ENCODE measurements at regions of chr20 and their contacts with region 1.

Region 1: DNA sequence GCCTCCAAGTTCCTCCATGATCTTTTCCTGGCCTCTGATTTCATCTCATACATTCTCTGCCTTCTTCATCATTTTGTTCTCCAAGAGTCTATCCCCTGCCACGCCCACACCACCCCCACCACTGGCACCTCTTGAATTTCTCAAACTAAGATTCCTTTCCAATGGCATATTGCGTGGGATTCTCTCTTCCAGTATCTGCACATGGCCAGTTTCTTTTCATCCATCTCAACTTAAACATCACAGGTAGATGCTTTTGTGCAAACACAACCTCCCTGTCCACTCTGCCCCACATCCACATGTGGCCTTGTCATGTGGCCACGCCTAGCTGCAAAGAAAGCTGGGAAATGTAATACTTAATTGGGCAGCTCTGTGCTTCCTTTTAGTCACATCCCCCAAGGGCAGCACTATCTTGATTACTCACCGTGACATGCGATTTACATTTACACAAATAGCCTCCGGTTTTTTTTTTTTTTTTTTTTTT is 33.4 kb upstream of the ZMYND8 start:
- DNase-seq: no peak
- ATAC-seq: no peak
- H3K4me3 ChIP-seq: no peak overlapping the region
- H3K27ac ChIP-seq: no peak overlapping the region
- H3K4me1 ChIP-seq: no peaks in the 10 kb centered on the region
- H3K27me3 ChIP-seq: no peaks in the 10 kb centered on the region

Region 2: DNA sequence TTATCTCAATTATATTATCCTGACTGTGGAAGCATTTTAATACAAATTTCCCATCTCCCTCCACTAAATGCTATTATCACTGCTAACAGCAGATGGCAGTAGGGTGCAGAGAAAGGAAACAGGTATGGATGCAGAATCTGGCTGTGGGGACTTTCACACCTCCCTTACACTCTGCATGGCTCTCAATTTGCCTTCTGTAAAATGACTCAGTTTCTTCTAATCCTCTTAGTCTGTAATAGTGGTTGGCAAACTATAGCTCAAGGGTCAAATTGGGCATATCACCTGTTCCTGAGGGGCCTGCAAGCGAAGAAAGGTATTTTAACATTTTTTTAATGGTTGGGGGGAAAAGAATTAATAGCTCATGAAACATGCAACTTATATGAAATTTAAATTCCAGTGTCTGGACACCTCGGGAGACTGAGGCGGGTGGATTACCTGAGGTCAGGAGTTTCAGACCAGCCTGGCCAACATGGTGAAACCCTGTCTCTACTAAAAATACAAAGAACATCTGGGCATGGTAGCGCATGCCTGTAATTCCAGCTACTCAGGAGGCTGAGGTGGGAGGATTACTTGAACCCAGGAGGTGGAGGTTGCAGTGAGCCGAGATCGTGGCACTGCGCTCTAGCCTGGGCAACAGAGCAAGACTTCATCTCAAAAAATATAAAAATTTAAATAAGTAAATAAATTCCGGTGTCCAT is 116.9 kb before region 1 on chr20:
- intact Hi-C with region 1: loop called (anchors 2 kb)
- DNase-seq: no peak
- ATAC-seq: peak; percentile 50 to 72
- H3K4me3 ChIP-seq: no peak overlapping the region
- H3K27ac ChIP-seq: no peak overlapping the region
- H3K4me1 ChIP-seq: no peaks in the 10 kb centered on the region
- H3K27me3 ChIP-seq: no peaks in the 10 kb centered on the region

Region 3: DNA sequence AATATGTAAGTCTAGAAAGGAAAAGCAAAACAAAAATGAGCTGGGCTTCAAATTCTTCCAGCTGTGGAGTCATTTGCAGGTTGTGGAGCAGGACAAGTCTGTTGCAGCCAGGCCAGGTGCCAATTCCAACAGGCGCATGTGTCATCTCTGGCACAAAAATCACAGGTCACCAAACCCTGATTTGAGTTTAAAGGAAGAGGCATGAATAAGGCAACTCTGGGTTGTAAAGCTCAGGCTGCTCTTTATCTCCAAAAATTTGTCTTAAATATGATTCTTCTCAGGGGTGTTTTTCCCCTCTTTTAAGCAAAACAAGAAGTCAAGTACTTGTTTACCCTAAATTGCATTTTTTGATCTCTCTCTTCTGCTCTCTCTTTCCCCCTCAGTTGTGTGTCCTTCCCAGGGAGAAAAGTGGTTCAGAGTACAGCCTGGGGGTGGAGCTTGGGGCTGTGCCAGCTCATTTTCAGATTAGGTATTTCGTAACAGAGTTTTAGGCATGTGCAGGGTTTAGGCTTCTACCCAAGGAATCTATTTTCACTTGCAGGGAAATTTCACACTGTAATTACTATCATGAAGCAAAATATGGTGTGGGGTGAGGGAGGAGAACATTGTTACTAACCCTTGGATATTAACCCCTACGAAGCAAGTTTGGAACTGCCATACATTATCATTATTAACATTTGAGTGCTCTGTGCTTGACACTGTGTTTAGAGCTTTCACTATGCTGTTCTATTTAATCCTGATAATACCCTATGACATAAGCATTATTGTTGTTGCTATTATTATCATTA is 103.5 kb after region 1 on chr20:
- intact Hi-C with region 1: loop called in 1 of 4 experiments (anchors 10 kb)
- DNase-seq: peak; percentile 90 to 97 (median 92)
- ATAC-seq: peak; percentile 96
- H3K4me3 ChIP-seq: no peak overlapping the region
- H3K27ac ChIP-seq: peak overlapping the region; percentile 96
- H3K4me1 ChIP-seq: peaks cover 4% of the 10 kb centered on the region
- H3K27me3 ChIP-seq: no peaks in the 10 kb centered on the region

Region 4: DNA sequence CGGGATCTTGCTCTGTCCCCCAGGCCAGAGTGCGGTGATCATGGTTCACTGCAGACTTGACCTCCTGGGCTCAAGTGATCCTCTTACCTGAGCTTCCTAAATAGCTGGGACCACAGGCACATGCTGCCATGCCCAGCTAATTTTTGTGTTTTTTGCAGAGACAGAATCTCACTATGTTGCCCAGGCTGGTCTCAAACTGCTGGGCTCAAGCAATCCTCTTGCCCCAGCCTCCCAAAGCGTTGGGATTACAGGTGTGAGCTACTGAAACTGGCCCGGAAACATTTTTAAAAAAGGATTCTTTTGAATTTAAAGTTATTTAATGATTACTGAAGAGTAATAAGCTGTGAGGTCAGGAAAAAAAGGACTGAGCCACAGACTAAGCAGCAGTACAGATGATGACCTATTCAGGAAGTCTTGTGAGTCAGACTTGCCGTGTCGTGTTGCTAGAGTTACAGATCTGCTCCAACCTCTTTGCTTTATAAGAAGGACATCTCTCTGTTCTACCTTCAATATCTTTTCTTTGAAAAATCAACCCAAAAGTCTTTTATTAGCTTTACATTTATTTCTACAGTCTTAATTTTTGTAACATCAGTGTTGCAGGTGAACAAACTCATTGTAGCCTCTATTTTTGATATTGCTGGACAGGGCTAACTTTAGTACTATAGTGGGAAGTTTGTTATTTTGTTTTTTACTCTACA is 220.5 kb after region 1 on chr20:
- intact Hi-C with region 1: loop called in 1 of 4 experiments (anchors 10 kb)
- DNase-seq: peak in 2 of 3 donors; percentile 35 to 51
- ATAC-seq: peak; percentile 77 to 91
- H3K4me3 ChIP-seq: no peak overlapping the region
- H3K27ac ChIP-seq: no peak overlapping the region
- H3K4me1 ChIP-seq: peaks cover 6% of the 10 kb centered on the region
- H3K27me3 ChIP-seq: no peaks in the 10 kb centered on the region

Region 5: GRCh38 chr20:47676219-47676721 is 286.4 kb after region 1 on chr20:
- intact Hi-C with region 1: no loop called
- DNase-seq: no peak
- ATAC-seq: no peak
- H3K4me3 ChIP-seq: no peak overlapping the region
- H3K27ac ChIP-seq: no peak overlapping the region
- H3K4me1 ChIP-seq: no peaks in the 10 kb centered on the region
- H3K27me3 ChIP-seq: no peaks in the 10 kb centered on the region

Measured in right cardiac atrium (tissue), 5 donors.